A673 (cell line): ENCODE measurements at regions of chr6 and their contacts with region 1.

Region 1: DNA sequence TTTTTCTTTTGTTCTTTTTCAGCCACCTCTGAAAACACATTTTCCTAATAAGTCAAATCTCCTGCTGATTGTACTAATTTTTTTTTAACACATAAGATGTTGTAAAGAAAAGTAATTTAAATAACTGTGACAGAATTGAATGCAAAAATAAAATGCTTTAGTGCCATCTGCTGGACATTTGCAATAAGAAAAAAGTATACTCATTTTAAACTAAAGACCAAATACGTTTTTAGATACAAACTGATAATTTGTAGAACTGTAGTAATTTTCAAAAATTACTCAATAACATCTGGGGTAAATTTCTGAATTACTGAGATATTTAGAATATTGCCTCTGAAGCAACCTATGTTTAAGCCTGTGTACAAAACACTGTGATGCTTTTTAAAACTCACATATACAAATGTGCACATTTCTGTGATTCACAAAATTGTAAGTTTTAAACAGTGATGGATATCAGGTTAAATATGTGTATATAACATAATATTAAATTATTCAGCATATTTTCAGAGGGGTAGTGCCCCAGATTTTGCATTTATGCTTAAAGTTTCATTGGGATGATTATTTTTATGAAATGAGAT is 198.7 kb downstream of the RIMS1 start:
- DNase-seq: peak; percentile 57
- H3K4me3 ChIP-seq: no peak overlapping the region
- H3K27ac ChIP-seq: peak overlapping the region; percentile 26
- H3K4me1 ChIP-seq: peaks cover 10% of the 10 kb centered on the region
- H3K27me3 ChIP-seq: no peaks in the 10 kb centered on the region
- CTCF ChIP-seq: peak; percentile 73

Region 2: DNA sequence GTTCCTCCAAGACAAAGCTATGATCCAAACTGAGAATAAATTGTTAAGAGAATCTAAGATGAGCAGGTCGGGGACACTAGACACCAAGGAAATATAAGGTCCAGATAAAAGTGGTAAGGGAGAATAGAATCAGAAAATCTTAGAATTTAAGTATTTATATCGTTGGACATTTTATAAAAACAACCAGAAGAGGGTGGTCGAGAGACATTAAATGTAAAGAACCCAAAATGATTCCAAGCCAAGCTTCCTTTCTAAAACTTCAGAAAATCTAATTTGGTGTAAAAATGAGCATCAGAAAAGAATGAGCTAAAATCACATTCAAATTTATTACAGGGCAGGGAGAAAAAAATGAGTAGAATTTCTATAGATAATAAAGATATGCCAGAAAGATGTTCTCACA is 894.3 kb before region 1 on chr6:
- CTCF ChIA-PET with region 1: no interaction called
- POLR2A ChIA-PET with region 1: no interaction called
- intact Hi-C with region 1: loop called (anchors 10 kb)
- DNase-seq: peak; percentile 64
- H3K4me3 ChIP-seq: no peak overlapping the region
- H3K27ac ChIP-seq: no peak overlapping the region
- H3K4me1 ChIP-seq: no peaks in the 10 kb centered on the region
- H3K27me3 ChIP-seq: no peaks in the 10 kb centered on the region
- CTCF ChIP-seq: peak; percentile 61

Region 3: DNA sequence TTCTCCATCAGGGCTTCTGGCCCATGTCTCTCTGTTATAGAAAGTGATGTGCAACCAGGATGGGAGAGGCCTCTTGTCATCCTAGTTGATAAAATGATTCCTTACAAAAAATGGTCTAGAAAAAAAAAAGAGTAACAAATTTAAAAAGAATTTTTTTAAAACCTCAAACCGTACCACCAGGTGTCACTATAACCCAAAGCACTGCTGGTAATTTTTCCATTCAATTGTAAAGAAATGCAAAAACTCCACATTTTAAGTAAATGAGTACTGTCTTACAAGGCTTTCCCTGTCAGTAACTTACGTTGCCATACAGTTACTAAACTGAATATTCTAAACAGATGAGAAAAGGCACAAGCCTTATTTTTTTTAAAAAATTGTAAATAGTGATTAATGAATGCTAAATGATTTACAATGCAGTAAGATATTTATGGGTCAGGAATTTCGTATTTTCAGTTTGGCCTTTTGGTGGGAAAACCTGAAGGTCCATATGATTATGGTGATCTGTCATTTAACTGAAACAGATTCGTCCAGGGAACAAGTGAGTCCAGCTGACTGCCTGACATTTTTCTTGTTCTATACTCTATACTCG is 701.1 kb before region 1 on chr6:
- CTCF ChIA-PET with region 1: no interaction called
- POLR2A ChIA-PET with region 1: no interaction called
- intact Hi-C with region 1: loop called (anchors 2 kb)
- DNase-seq: peak; percentile 71
- H3K4me3 ChIP-seq: no peak overlapping the region
- H3K27ac ChIP-seq: no peak overlapping the region
- H3K4me1 ChIP-seq: peaks cover 18% of the 10 kb centered on the region
- H3K27me3 ChIP-seq: no peaks in the 10 kb centered on the region
- CTCF ChIP-seq: peak; percentile 66

Region 4: GRCh38 chr6:71533939-71534379 is 551.1 kb before region 1 on chr6:
- CTCF ChIA-PET with region 1: no interaction called
- POLR2A ChIA-PET with region 1: no interaction called
- intact Hi-C with region 1: loop called (anchors 2 kb)
- DNase-seq: peak; percentile 24
- H3K4me3 ChIP-seq: no peak overlapping the region
- H3K27ac ChIP-seq: no peak overlapping the region
- H3K4me1 ChIP-seq: no peaks in the 10 kb centered on the region
- H3K27me3 ChIP-seq: no peaks in the 10 kb centered on the region
- CTCF ChIP-seq: peak; percentile 69

Region 5: GRCh38 chr6:71621918-71622519 is 463.1 kb before region 1 on chr6:
- CTCF ChIA-PET with region 1: no interaction called
- POLR2A ChIA-PET with region 1: no interaction called
- intact Hi-C with region 1: loop called (anchors 2 kb)
- DNase-seq: peak; percentile 46
- H3K4me3 ChIP-seq: no peak overlapping the region
- H3K27ac ChIP-seq: no peak overlapping the region
- H3K4me1 ChIP-seq: no peaks in the 10 kb centered on the region
- H3K27me3 ChIP-seq: no peaks in the 10 kb centered on the region
- CTCF ChIP-seq: peak; percentile 64

Region 6: GRCh38 chr6:71855406-71855805 is 229.7 kb before region 1 on chr6:
- CTCF ChIA-PET with region 1: no interaction called
- POLR2A ChIA-PET with region 1: no interaction called
- intact Hi-C with region 1: loop called (anchors 1 kb)
- DNase-seq: peak; percentile 92
- H3K4me3 ChIP-seq: no peak overlapping the region
- H3K27ac ChIP-seq: no peak overlapping the region
- H3K4me1 ChIP-seq: peaks cover 12% of the 10 kb centered on the region
- H3K27me3 ChIP-seq: no peaks in the 10 kb centered on the region
- CTCF ChIP-seq: peak; percentile 54

Region 7: GRCh38 chr6:71886184-71887005 is 198.7 kb before region 1 on chr6 and contains the start of gene RIMS1:
- CTCF ChIA-PET with region 1: no interaction called
- POLR2A ChIA-PET with region 1: no interaction called
- intact Hi-C with region 1: no loop called
- DNase-seq: peak; percentile 63
- H3K4me3 ChIP-seq: peak within 1 kb of the TSS; percentile 51
- H3K27ac ChIP-seq: no peak within 1 kb of the TSS
- H3K4me1 ChIP-seq: peaks cover 6% of the 10 kb centered on the region
- H3K27me3 ChIP-seq: peaks cover 5% of the 10 kb centered on the region
- CTCF ChIP-seq: peak; percentile 55
- total RNA-seq, gene RIMS1: 0.50 and 1.3 TPM in 2 replicates